Activated CD4-positive, alpha-beta T cell treated with anti-CD3 and anti-CD28 coated beads for 36 hours (primary cell): ENCODE measurements at regions of chr2 and their contacts with region 1.

Region 1: DNA sequence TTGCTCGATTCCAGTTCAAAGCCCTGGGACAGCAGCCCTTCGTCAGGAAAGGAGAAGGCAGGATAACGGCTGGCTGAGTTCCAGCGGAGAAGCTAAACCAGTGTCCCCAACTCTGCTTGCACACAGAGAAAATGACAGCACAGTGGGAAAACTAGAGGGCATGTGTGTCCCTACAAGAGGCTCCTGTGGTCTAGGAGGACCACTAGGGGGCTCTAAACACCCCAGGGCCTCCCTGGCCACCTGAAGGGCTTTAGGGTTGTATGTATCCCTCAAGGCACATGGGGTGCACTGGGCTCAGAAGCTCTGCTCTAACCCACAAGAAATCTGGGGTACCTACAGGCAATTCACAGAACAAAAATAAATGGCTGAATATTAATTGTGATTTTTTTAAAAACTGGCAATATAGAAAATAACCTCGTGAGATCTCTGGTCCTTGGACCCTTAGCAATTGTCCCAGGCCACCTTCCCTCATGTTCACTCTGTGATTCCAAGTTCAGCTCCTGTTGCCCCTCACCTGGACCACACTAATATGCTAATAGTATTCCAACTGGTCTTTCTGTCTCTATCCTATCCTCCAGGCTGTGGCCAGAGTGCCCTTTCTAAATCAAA is 17.5 kb downstream of the STAT1 start:
- DNase-seq: no peak
- ATAC-seq: no peak
- H3K4me3 Mint-ChIP-seq: no peak overlapping the region
- H3K27ac Mint-ChIP-seq: peak overlapping the region; percentile 69
- H3K4me1 Mint-ChIP-seq: peaks cover 47% of the 10 kb centered on the region
- H3K27me3 Mint-ChIP-seq: no peaks in the 10 kb centered on the region

Region 2: DNA sequence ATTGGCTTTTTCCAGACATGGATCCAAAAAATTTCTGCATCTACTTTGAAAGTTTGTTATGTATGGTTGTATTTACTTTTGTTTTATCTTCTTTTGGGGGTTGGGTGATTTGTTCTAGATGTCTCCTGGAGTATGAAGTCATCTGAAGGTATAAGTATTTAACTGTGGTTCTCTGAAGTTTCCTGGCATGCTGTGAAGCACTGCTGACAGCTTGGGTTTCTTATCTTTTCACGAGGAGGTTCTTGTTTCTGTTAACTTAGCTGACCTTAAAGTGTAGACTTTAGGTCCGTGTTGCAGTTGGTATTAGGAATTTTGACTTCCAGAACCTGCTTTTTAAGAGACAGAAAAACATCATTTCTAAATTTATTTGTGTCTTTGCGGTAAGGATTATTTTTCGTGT is 100.0 kb before region 1 on chr2:
- CTCF ChIA-PET with region 1: no interaction called
- POLR2A ChIA-PET with region 1: no interaction called
- intact Hi-C with region 1: loop called in 1 of 2 experiments (anchors 5 kb)
- DNase-seq: no peak
- ATAC-seq: no peak
- H3K4me3 Mint-ChIP-seq: no peak overlapping the region
- H3K27ac Mint-ChIP-seq: peak overlapping the region; percentile 56
- H3K4me1 Mint-ChIP-seq: peaks cover 29% of the 10 kb centered on the region
- H3K27me3 Mint-ChIP-seq: no peaks in the 10 kb centered on the region

Region 3: DNA sequence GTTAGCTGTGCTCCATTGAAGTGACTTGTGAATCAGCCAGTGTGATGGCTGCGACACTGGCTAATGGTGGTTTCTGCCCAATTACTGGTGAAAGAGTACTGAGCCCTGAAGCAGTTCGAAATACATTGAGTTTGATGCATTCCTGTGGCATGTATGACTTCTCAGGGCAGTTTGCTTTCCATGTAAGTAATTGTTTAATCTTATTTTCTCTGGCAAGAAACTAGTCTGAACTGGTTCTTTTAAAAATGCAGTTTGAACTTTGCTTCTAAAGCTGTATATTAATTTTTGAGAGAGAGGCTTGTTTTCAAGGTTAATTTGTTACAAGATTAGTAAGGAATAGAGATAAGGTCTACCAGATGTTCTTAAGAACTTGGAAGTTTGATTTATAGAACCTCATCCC is 69.1 kb before region 1 on chr2:
- CTCF ChIA-PET with region 1: no interaction called
- POLR2A ChIA-PET with region 1: no interaction called
- intact Hi-C with region 1: loop called in 1 of 2 experiments (anchors 5 kb)
- DNase-seq: no peak
- ATAC-seq: no peak
- H3K4me3 Mint-ChIP-seq: no peak overlapping the region
- H3K27ac Mint-ChIP-seq: no peak overlapping the region
- H3K4me1 Mint-ChIP-seq: peaks cover 15% of the 10 kb centered on the region
- H3K27me3 Mint-ChIP-seq: no peaks in the 10 kb centered on the region

Region 4: GRCh38 chr2:190974631-190975361 is 21.6 kb before region 1 on chr2:
- CTCF ChIA-PET with region 1: interaction called, 3 read pairs
- POLR2A ChIA-PET with region 1: no interaction called
- intact Hi-C with region 1: loop called in 1 of 2 experiments (anchors 2 kb)
- DNase-seq: no peak
- ATAC-seq: no peak
- H3K4me3 Mint-ChIP-seq: no peak overlapping the region
- H3K27ac Mint-ChIP-seq: peak overlapping the region; percentile 52
- H3K4me1 Mint-ChIP-seq: peaks cover 33% of the 10 kb centered on the region
- H3K27me3 Mint-ChIP-seq: no peaks in the 10 kb centered on the region

Region 5: GRCh38 chr2:190979906-190980629 is 16.4 kb before region 1 on chr2:
- CTCF ChIA-PET with region 1: interaction called, 3 read pairs
- POLR2A ChIA-PET with region 1: no interaction called
- intact Hi-C with region 1: loop called in 1 of 2 experiments (anchors 2 kb)
- DNase-seq: no peak
- ATAC-seq: no peak
- H3K4me3 Mint-ChIP-seq: no peak overlapping the region
- H3K27ac Mint-ChIP-seq: peak overlapping the region; percentile 78
- H3K4me1 Mint-ChIP-seq: peaks cover 69% of the 10 kb centered on the region
- H3K27me3 Mint-ChIP-seq: no peaks in the 10 kb centered on the region

Region 6: GRCh38 chr2:191030521-191031154 is 34.2 kb after region 1 on chr2:
- CTCF ChIA-PET with region 1: no interaction called
- POLR2A ChIA-PET with region 1: no interaction called
- intact Hi-C with region 1: loop called in 1 of 2 experiments (anchors 5 kb)
- DNase-seq: peak; percentile 57
- ATAC-seq: peak; percentile 82
- H3K4me3 Mint-ChIP-seq: no peak overlapping the region
- H3K27ac Mint-ChIP-seq: peak overlapping the region; percentile 55
- H3K4me1 Mint-ChIP-seq: peaks cover 38% of the 10 kb centered on the region
- H3K27me3 Mint-ChIP-seq: no peaks in the 10 kb centered on the region

Region 7: GRCh38 chr2:191234376-191234775 is 237.9 kb after region 1 on chr2:
- CTCF ChIA-PET with region 1: no interaction called
- POLR2A ChIA-PET with region 1: no interaction called
- intact Hi-C with region 1: no loop called
- DNase-seq: no peak
- ATAC-seq: no peak
- H3K4me3 Mint-ChIP-seq: no peak overlapping the region
- H3K27ac Mint-ChIP-seq: no peak overlapping the region
- H3K4me1 Mint-ChIP-seq: no peaks in the 10 kb centered on the region
- H3K27me3 Mint-ChIP-seq: no peaks in the 10 kb centered on the region